Activated B cell treated with CpG ODN at 0.5 μM for 24 hours (primary cell): ENCODE measurements at regions of chr19 and their contacts with region 1.

Region 1: GRCh38 chr19:10194500-10195289 is at the start of gene DNMT1:
- DNase-seq: peak; percentile 94
- ATAC-seq: peak; percentile 97
- H3K4me3 Mint-ChIP-seq: peak within 1 kb of the TSS; percentile 94
- H3K27ac Mint-ChIP-seq: peak within 1 kb of the TSS; percentile 89
- H3K4me1 Mint-ChIP-seq: peaks cover 34% of the 10 kb centered on the region
- H3K27me3 Mint-ChIP-seq: no peaks in the 10 kb centered on the region
- CTCF ChIP-seq: no peak
- total RNA-seq, gene DNMT1: 136 and 156 TPM in 2 replicates

Region 2: DNA sequence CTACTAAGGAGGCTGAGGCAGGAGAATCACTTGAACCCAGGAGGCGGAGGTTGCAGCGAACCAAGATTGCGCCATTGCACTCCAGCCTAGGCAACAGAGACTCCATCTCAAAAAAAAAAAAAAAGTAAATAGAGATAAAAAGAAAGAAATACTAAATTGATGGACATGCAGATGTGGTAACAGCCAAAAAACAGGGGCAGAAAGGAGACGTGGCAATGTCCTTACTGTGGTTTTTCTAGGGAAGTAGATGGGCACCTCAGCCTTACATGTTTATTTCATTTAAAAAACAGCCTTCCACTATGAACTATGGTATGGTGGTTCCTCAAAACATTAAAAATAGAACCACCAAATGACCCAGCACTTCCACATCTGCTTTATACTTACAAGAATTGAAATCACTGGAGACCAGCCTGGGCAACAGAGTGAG is 68.5 kb before region 1 on chr19:
- CTCF ChIA-PET with region 1: no interaction called
- POLR2A ChIA-PET with region 1: interaction called, 9 read pairs
- intact Hi-C with region 1: loop called (anchors 2 kb)
- DNase-seq: no peak
- ATAC-seq: peak; percentile 83
- H3K4me3 Mint-ChIP-seq: no peak overlapping the region
- H3K27ac Mint-ChIP-seq: peak overlapping the region; percentile 53
- H3K4me1 Mint-ChIP-seq: peaks cover 17% of the 10 kb centered on the region
- H3K27me3 Mint-ChIP-seq: no peaks in the 10 kb centered on the region
- CTCF ChIP-seq: no peak

Region 3: DNA sequence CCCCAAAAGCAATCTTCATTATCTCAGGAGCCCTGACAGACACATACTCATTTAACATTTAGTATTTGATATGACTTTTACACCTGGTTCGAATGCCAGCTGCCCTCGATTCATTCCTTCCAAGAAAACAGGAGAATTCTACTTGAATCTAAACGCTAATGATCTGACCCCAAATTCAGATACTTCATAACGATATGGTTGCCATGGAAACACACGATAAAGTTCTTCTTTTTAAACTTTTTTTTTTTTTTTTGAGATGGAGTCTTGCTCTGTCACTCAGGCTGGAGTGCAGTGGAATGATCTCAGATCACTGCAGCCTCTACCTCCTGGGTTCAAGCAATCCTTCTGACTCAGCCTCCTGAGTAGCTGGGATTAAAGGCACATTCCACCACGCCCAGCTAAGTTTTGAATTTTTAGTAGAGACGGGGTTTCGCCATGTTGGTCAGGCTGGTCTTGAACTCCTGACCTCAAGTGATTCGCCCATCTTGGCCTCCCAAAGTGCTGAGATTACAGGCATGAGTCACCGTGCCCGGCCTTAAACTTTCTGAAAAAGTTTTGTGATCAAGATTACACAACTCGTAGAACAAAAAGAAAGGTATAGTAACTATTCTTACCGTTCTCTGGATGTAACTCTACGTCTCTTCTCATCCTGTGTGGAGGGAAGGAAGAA is 21.3 kb before region 1 on chr19:
- CTCF ChIA-PET with region 1: no interaction called
- POLR2A ChIA-PET with region 1: no interaction called
- intact Hi-C with region 1: no loop called
- DNase-seq: no peak
- ATAC-seq: no peak
- H3K4me3 Mint-ChIP-seq: no peak overlapping the region
- H3K27ac Mint-ChIP-seq: no peak overlapping the region
- H3K4me1 Mint-ChIP-seq: no peaks in the 10 kb centered on the region
- H3K27me3 Mint-ChIP-seq: no peaks in the 10 kb centered on the region
- CTCF ChIP-seq: no peak

Region 4: DNA sequence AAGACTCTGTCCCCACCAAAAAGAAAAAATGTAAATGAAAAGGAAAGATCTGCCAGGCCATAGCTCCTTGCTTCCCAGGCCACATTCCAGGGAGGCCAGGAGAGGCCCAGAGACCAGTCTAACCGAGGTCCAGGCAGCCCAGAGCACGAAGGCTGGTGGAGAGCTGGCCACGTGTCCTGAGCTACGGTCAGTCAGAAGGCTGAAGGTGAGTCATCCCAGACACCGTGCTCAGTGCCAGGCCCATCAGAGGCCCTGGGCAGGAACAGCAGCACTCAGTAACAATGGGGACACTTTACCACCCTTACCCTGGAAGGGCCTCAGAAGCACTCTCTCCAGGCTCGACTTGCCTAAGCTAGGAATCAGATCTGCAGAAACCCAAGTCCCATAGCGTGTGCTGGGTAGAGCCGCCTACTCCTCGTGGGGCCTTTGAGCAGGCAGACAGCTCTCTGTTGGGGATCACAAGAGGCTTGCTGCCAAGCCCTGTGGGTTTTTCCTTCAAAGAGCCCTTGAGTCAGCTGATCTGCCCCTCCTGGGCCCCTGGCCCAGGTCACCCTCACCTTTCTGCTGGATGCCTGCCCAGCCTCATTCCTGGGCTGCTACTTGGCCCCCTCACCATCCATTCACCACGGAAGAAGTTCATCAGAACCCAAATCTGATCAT is 11.7 kb after region 1 on chr19:
- CTCF ChIA-PET with region 1: no interaction called
- POLR2A ChIA-PET with region 1: no interaction called
- intact Hi-C with region 1: no loop called
- DNase-seq: no peak
- ATAC-seq: no peak
- H3K4me3 Mint-ChIP-seq: no peak overlapping the region
- H3K27ac Mint-ChIP-seq: no peak overlapping the region
- H3K4me1 Mint-ChIP-seq: no peaks in the 10 kb centered on the region
- H3K27me3 Mint-ChIP-seq: no peaks in the 10 kb centered on the region
- CTCF ChIP-seq: no peak

Region 5: GRCh38 chr19:10238172-10238783 is 43.6 kb after region 1 on chr19:
- CTCF ChIA-PET with region 1: no interaction called
- POLR2A ChIA-PET with region 1: interaction called, 18 read pairs
- intact Hi-C with region 1: loop called (anchors 2 kb)
- DNase-seq: no peak
- ATAC-seq: no peak
- H3K4me3 Mint-ChIP-seq: no peak overlapping the region
- H3K27ac Mint-ChIP-seq: peak overlapping the region; percentile 73
- H3K4me1 Mint-ChIP-seq: peaks cover 51% of the 10 kb centered on the region
- H3K27me3 Mint-ChIP-seq: no peaks in the 10 kb centered on the region
- CTCF ChIP-seq: no peak

Region 6: GRCh38 chr19:10612491-10613119 is 417.9 kb after region 1 on chr19:
- CTCF ChIA-PET with region 1: no interaction called
- POLR2A ChIA-PET with region 1: no interaction called
- intact Hi-C with region 1: no loop called
- DNase-seq: no peak
- ATAC-seq: no peak
- H3K4me3 Mint-ChIP-seq: no peak overlapping the region
- H3K27ac Mint-ChIP-seq: peak overlapping the region; percentile 6
- H3K4me1 Mint-ChIP-seq: peaks cover 61% of the 10 kb centered on the region
- H3K27me3 Mint-ChIP-seq: no peaks in the 10 kb centered on the region
- CTCF ChIP-seq: no peak